Endothelial cell of umbilical vein (primary cell): ENCODE measurements at regions of chr3 and their contacts with region 1.

Region 1: DNA sequence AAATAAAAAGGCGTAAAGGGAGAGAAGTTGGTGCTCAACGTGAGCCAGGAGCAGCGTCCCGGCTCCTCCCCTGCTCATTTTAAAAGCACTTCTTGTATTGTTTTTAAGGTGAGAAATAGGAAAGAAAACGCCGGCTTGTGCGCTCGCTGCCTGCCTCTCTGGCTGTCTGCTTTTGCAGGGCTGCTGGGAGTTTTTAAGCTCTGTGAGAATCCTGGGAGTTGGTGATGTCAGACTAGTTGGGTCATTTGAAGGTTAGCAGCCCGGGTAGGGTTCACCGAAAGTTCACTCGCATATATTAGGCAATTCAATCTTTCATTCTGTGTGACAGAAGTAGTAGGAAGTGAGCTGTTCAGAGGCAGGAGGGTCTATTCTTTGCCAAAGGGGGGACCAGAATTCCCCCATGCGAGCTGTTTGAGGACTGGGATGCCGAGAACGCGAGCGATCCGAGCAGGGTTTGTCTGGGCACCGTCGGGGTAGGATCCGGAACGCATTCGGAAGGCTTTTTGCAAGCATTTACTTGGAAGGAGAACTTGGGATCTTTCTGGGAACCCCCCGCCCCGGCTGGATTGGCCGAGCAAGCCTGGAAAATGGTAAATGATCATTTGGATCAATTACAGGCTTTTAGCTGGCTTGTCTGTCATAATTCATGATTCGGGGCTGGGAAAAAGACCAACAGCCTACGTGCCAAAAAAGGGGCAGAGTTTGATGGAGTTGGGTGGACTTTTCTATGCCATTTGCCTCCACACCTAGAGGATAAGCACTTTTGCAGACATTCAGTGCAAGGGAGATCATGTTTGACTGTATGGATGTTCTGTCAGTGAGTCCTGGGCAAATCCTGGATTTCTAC is at the start of gene RARB:
- DNase-seq: peak; percentile 98
- H3K4me3 ChIP-seq: peak within 1 kb of the TSS; percentile 75 to 100 (median 96)
- H3K27ac ChIP-seq: peak within 1 kb of the TSS; percentile 96
- H3K4me1 ChIP-seq: peaks cover 27% of the 10 kb centered on the region
- H3K27me3 ChIP-seq: no peaks in the 10 kb centered on the region
- CTCF ChIP-seq: no peak
- POLR2A ChIP-seq: peak; percentile 96
- total RNA-seq, gene RARB: 19.3 and 23.4 TPM in 2 replicates

Region 2: DNA sequence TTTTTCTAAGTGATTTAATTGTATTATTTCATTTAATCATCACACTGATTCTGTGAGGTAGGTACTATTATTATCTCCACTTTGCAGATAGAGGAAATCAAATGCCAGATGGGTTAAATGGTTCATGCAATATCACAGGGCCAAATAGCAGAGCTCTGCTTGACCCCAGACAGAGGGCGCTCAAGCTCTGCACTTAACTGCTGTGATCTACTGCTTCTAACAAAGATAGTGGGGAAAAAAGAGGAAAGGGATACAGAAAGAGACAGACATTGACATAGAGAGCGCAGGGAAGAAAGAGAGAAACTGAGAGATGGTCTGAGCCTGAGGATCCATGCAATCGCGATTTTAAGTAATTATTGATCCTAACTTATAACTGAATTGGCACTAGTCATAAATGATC is 654.4 kb before region 1 on chr3:
- CTCF ChIA-PET with region 1: interaction called, 3 read pairs
- POLR2A ChIA-PET with region 1: no interaction called
- dilution Hi-C with region 1: no loop called
- intact Hi-C with region 1: loop called (anchors 2 kb)
- DNase-seq: peak; percentile 61
- H3K4me3 ChIP-seq: no peak overlapping the region
- H3K27ac ChIP-seq: no peak overlapping the region
- H3K4me1 ChIP-seq: no peaks in the 10 kb centered on the region
- H3K27me3 ChIP-seq: no peaks in the 10 kb centered on the region
- CTCF ChIP-seq: peak; percentile 69 to 71
- POLR2A ChIP-seq: no peak

Region 3: DNA sequence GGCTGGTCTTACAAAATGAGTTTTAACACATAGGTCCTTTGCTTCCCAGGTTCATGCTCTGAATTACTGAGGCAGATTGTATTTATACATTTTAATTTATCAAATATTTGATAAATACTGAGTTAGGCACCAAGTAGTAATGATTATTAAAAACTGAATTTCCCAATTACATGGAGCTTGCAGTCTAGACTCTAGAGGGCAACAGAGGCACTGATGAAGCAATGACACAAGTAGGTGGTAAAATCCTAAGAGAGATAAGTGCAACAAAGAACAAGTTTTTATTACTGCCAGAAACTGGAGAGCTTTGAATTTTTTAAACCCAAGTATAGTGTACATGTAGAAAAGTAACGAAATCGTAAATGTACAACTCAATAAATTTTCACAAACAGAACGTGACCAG is 406.3 kb before region 1 on chr3:
- CTCF ChIA-PET with region 1: no interaction called
- POLR2A ChIA-PET with region 1: interaction called, 4 read pairs
- dilution Hi-C with region 1: no loop called
- intact Hi-C with region 1: loop called (anchors 5 kb)
- DNase-seq: peak; percentile 42
- H3K4me3 ChIP-seq: no peak overlapping the region
- H3K27ac ChIP-seq: no peak overlapping the region
- H3K4me1 ChIP-seq: no peaks in the 10 kb centered on the region
- H3K27me3 ChIP-seq: no peaks in the 10 kb centered on the region
- CTCF ChIP-seq: peak; percentile 18 to 45
- POLR2A ChIP-seq: no peak

Region 4: GRCh38 chr3:25455441-25456132 is 27.4 kb after region 1 on chr3:
- CTCF ChIA-PET with region 1: interaction called, 9 read pairs
- POLR2A ChIA-PET with region 1: interaction called, 10 read pairs
- dilution Hi-C with region 1: no loop called
- intact Hi-C with region 1: loop called (anchors 1 kb)
- DNase-seq: peak; percentile 69
- H3K4me3 ChIP-seq: no peak overlapping the region
- H3K27ac ChIP-seq: peak overlapping the region; percentile 77
- H3K4me1 ChIP-seq: peaks cover 70% of the 10 kb centered on the region
- H3K27me3 ChIP-seq: no peaks in the 10 kb centered on the region
- CTCF ChIP-seq: no peak
- POLR2A ChIP-seq: no peak

Region 5: DNA sequence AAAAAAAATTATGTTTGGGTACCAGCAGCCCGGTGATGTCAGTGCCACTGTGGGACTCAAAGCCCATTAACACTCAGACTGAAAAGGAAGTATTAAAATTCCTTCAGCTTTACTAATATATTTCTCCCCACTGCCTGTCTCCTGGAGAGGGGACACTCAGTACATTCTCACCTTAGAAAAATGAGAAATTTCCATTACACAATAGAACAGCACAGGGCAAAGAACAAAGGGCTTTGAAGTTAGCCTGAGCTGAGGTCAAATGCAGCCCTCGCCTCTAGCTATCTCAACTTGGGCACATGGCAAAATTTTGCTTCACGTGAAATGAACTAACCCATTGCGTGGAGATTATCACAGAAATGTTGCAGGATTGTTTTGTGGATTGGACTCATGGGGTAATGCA is 80.7 kb after region 1 on chr3:
- CTCF ChIA-PET with region 1: interaction called, 5 read pairs
- POLR2A ChIA-PET with region 1: interaction called, 4 read pairs
- dilution Hi-C with region 1: no loop called
- intact Hi-C with region 1: loop called (anchors 1 kb)
- DNase-seq: peak; percentile 94
- H3K4me3 ChIP-seq: no peak overlapping the region
- H3K27ac ChIP-seq: peak overlapping the region; percentile 98
- H3K4me1 ChIP-seq: peaks cover 28% of the 10 kb centered on the region
- H3K27me3 ChIP-seq: no peaks in the 10 kb centered on the region
- CTCF ChIP-seq: no peak
- POLR2A ChIP-seq: no peak